Panc1 (cell line): ENCODE measurements at regions of chr11 and their contacts with region 1.

Region 1: DNA sequence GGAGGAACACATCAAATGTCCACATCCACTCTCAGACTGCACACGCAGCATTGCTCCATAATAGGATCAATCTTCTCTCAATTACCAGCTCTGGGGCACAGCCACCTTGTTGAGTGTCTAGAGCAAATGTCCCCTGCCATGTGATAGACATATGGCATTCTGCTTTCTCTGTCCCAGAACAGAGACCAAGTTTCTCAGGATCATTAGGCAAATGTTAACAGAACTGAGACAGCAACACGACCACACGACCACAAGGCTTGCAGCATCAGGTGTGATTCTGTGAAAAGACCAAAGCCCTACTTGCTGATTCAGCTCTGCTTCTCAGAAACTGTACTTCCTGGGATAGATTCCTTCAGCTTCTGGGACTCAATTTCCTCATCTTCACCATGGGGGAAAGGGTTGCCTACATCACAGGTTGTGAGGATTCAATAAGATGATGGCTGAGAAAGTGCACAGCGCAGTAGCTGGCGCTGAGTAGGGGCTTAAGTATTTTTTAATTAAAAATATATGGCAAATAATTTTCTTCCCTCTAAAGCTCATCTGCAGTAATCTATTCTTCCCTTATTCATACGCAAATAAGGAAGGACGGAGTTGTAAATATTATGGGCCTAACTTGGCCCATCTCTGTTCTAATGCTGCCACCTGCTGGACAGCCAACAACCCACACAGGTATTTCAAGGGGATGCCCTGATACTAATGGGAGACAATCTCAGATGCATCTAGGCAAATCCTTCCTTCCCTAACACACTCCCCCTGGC is 54.3 kb upstream of the USP47 start:
- DNase-seq: peak; percentile 59
- ATAC-seq: peak; percentile 97
- H3K4me3 ChIP-seq: no peak overlapping the region
- H3K27ac ChIP-seq: no peak overlapping the region
- H3K4me1 ChIP-seq: no peaks in the 10 kb centered on the region; the same call in 1 of the 2 replicates
- H3K27me3 ChIP-seq: no peaks in the 10 kb centered on the region
- CTCF ChIP-seq: peak; percentile 83

Region 2: DNA sequence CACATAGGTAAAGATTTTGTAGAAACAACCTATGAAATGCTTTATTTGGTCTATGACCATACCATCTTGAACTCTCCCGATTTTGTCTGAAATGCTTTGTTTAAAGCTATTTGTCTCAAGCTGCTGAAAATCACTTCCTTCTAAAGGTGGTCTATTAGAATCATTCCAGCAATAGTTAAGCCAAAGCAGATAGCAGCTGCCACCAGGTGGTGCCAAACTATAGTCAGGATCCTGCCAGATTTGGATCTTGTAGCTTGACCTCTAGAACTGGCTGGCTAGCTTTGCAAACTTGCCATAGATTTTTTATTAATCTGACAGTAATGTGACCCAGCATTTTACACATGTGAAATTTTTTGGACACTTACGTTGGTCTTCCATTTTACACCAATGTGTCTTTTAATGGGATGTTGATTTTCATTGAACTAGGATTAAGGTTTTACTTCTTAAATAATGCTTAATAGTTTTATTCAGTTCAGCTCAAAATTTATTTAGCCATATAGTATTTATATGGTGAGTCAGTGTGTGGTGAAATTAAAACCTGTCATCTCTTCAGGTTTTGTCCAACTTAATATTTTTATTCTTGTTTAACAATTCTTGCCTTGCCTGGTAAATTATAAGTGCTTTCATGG is 1016.7 kb before region 1 on chr11:
- CTCF ChIA-PET with region 1: interaction called, 4 read pairs
- POLR2A ChIA-PET with region 1: no interaction called
- in situ Hi-C with region 1: no loop called
- intact Hi-C with region 1: loop called (anchors 10 kb)
- DNase-seq: peak; percentile 51
- ATAC-seq: peak; percentile 92
- H3K4me3 ChIP-seq: no peak overlapping the region
- H3K27ac ChIP-seq: no peak overlapping the region
- H3K4me1 ChIP-seq: no peaks in the 10 kb centered on the region
- H3K27me3 ChIP-seq: no peaks in the 10 kb centered on the region
- CTCF ChIP-seq: peak; percentile 96

Region 3: DNA sequence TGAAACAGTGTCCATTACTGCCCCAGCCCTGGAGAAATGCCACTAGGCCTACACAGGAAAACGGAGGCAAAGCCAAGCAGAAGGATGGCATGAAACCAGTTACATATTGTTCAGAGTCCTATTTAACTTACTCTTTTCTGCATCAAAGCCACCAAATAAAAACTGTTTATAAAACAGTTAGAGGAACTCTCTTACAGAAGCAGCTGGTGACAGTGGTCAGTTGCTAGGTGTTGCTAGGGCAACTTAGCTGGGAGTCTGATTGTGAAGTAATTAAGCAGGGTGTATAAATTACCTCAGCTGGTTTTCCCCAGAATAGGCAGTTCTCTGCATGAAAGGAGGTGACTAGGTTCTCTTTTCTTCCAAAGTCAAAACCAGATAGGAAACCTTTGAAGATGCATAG is 814.1 kb before region 1 on chr11:
- CTCF ChIA-PET with region 1: no interaction called
- POLR2A ChIA-PET with region 1: interaction called, 13 read pairs
- in situ Hi-C with region 1: no loop called
- intact Hi-C with region 1: no loop called
- DNase-seq: no peak
- ATAC-seq: no peak
- H3K4me3 ChIP-seq: no peak overlapping the region
- H3K27ac ChIP-seq: no peak overlapping the region
- H3K4me1 ChIP-seq: no peaks in the 10 kb centered on the region
- H3K27me3 ChIP-seq: no peaks in the 10 kb centered on the region
- CTCF ChIP-seq: no peak

Region 4: DNA sequence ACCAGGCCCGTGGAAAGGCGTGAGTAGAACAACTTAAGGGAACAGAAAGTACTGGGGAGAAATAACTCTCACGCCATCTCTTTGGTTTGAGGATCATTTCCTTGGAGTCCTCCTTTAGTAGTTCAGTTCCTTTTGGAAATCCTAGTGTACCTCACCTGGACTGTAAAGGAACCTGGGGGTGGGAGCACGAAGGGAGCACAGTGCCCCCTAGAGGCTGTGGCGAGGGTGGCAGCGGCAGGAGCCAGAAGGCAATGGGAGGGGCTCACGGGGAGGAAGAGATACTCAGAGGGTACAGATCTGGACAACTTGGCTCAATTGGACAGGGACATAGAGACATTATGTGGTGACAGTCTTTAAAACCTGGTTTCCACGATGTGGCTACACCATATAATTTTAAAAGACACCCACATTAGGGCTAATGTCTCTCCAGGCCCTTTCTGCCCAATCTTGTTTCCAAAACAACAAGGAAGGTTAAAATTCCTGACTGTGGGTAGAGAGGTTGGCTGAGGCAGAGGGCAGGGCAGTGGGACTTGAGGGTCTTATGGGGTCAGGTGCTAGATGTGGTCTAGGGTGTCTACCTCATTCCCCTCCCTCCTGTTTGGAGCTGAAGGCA is 521.4 kb before region 1 on chr11:
- CTCF ChIA-PET with region 1: no interaction called
- POLR2A ChIA-PET with region 1: no interaction called
- in situ Hi-C with region 1: no loop called
- intact Hi-C with region 1: loop called (anchors 10 kb)
- DNase-seq: peak; percentile 28
- ATAC-seq: peak; percentile 69
- H3K4me3 ChIP-seq: no peak overlapping the region
- H3K27ac ChIP-seq: no peak overlapping the region
- H3K4me1 ChIP-seq: no peaks in the 10 kb centered on the region
- H3K27me3 ChIP-seq: no peaks in the 10 kb centered on the region
- CTCF ChIP-seq: peak; percentile 95

Region 5: DNA sequence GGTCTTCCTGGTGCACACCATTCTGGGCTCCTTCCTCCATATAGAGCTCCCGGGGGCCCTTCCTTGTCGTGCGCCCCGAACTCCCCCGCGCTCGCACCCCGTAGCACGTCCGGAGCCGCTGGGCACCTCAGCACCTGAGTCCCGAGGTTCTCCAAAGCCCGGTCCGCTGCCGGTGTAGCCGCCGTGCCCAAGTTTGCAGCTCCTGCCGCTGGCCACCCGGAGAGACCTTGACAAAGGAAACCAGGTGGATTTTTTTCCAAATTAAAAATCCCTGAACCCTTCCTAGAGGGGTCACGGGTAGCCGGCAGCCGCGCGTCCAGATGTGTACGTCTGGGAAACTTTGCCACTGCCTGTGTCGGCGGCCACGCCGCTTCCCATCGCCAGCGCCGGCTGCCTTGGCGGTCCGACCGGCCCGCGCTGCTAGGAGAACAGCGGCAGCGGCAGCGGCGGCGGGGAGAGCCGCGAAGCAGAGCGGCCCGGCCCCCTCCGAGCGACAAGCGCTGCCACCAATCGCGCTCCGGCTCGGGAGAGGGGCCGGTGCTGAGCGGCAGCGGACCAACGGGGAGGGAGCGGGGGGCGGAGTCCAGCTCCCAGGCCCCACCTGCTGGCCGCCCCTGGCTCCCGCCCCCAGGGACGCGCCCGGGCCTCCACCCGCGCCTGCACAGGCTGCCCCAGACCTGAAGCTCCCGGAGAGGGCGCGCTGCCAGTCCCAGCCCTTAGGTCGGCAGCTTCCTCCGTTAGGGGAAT is 165.7 kb before region 1 on chr11 and contains the start of gene GALNT18:
- CTCF ChIA-PET with region 1: interaction called, 5 read pairs
- POLR2A ChIA-PET with region 1: no interaction called
- in situ Hi-C with region 1: no loop called
- intact Hi-C with region 1: loop called (anchors 5 kb)
- DNase-seq: no peak
- ATAC-seq: peak; percentile 94
- H3K4me3 ChIP-seq: peak within 1 kb of the TSS; percentile 62 to 67
- H3K27ac ChIP-seq: peak within 1 kb of the TSS; percentile 70
- H3K4me1 ChIP-seq: peaks cover 16% of the 10 kb centered on the region
- H3K27me3 ChIP-seq: no peaks in the 10 kb centered on the region
- CTCF ChIP-seq: peak; percentile 48
- total RNA-seq, gene GALNT18: 8.6 TPM

Region 6: GRCh38 chr11:11691296-11692142 is 96.0 kb before region 1 on chr11:
- CTCF ChIA-PET with region 1: no interaction called
- POLR2A ChIA-PET with region 1: no interaction called
- in situ Hi-C with region 1: no loop called
- intact Hi-C with region 1: no loop called
- DNase-seq: no peak
- ATAC-seq: no peak
- H3K4me3 ChIP-seq: no peak overlapping the region
- H3K27ac ChIP-seq: no peak overlapping the region
- H3K4me1 ChIP-seq: no peaks in the 10 kb centered on the region
- H3K27me3 ChIP-seq: no peaks in the 10 kb centered on the region
- CTCF ChIP-seq: no peak

Region 7: DNA sequence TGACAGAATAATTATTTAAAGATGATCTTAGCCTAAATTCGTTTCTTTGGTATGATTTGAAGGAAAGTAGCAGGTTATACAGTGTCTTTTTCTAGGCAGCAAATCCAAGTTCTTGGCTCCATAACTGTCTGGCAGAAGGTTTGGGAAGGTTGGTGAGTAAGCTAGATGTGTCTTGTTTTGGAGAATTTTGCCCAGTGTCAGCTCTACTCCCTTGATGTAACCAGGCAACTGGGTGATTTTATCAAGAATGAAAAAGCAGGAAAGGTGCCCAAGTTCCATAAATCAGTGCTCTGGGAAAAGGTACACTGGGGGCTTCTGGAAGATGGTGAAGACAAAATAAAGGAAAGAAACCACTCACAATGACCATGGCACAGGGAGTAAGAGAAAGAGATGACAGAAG is 17.2 kb before region 1 on chr11:
- CTCF ChIA-PET with region 1: no interaction called
- POLR2A ChIA-PET with region 1: no interaction called
- in situ Hi-C with region 1: no loop called
- intact Hi-C with region 1: no loop called
- DNase-seq: no peak
- ATAC-seq: no peak
- H3K4me3 ChIP-seq: no peak overlapping the region
- H3K27ac ChIP-seq: no peak overlapping the region
- H3K4me1 ChIP-seq: no peaks in the 10 kb centered on the region
- H3K27me3 ChIP-seq: peaks cover 26% of the 10 kb centered on the region
- CTCF ChIP-seq: no peak

Region 8: DNA sequence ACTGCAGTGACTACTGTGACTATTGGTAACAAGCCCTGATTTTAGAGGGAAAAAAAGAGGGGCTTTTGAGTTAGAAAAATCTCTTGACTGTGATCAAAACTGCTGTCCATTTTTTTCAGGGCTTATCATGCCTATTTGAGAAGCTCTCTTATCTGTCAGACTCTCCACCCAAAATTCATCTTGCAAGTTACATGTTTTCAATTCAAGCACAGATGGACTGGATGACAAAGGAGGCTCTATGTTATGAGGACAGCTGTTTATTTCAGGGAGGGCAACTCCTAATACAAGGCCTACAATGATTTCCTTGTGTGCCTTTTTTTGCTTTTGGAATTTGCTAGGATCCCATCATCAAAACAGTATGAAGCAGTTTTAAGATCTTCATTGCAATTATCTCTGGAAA is 19.1 kb after region 1 on chr11:
- CTCF ChIA-PET with region 1: no interaction called
- POLR2A ChIA-PET with region 1: no interaction called
- in situ Hi-C with region 1: no loop called
- intact Hi-C with region 1: no loop called
- DNase-seq: no peak
- ATAC-seq: no peak
- H3K4me3 ChIP-seq: no peak overlapping the region
- H3K27ac ChIP-seq: no peak overlapping the region
- H3K4me1 ChIP-seq: no peaks in the 10 kb centered on the region
- H3K27me3 ChIP-seq: no peaks in the 10 kb centered on the region
- CTCF ChIP-seq: no peak